Vagina (tissue), 2 donors: ENCODE measurements at regions of chr22 and their contacts with region 1.

Region 1: GRCh38 chr22:46267431-46268279 is at the start of gene TTC38:
- DNase-seq: no peak
- H3K4me3 ChIP-seq: peak within 1 kb of the TSS; percentile 61 to 94
- H3K27ac ChIP-seq: peak within 1 kb of the TSS; percentile 75
- H3K4me1 ChIP-seq: peaks cover 36% of the 10 kb centered on the region
- H3K27me3 ChIP-seq: no peaks in the 10 kb centered on the region
- CTCF ChIP-seq: no peak
- POLR2A ChIP-seq: no peak
- total RNA-seq, gene TTC38: 58.7 TPM

Region 2: DNA sequence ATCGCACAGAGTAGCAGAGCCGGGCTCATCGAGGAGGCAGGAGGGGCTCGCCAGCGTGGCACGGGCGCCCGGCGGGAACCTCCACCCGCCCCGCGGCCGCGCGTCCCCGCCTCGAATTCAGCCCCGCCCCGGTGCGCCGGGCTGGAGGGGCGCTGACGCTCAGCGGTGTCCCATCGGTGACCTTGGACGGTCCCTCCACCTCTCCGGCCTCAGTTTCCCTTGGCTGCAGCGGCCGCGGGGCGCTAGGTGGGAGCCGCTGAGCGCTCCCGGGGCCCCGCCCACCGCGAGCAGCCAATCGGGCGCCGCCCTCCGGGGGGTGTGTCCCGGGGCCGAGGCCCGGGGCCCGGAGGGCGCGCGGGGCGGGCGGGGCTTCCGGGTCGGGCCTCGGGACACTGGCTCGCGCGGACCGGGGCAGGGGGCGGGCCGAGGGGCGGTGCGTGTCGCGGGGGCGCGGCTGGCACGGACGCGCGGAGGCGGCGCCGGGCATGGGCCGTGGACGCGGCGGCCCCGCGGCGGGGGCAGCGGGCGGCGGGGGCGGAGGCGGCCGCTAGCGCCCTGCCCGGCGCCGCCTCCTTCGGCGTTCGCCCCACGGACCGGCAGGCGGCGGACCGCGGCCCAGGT is 117.5 kb before region 1 on chr22 and contains the start of gene PPARA:
- intact Hi-C with region 1: loop called (anchors 10 kb)
- DNase-seq: peak in 1 of 2 donors; percentile 81
- H3K4me3 ChIP-seq: peak within 1 kb of the TSS; percentile 76 to 97
- H3K27ac ChIP-seq: peak within 1 kb of the TSS; percentile 92
- H3K4me1 ChIP-seq: peaks cover 42% of the 10 kb centered on the region
- H3K27me3 ChIP-seq: no peaks in the 10 kb centered on the region
- CTCF ChIP-seq: no peak
- POLR2A ChIP-seq: peak in 1 of 2 donors; percentile 46
- total RNA-seq, gene PPARA: 13.5 TPM

Region 3: GRCh38 chr22:46462726-46463371 is 195.2 kb after region 1 on chr22:
- intact Hi-C with region 1: no loop called
- DNase-seq: no peak
- H3K4me3 ChIP-seq: no peak overlapping the region
- H3K27ac ChIP-seq: no peak overlapping the region
- H3K4me1 ChIP-seq: peaks cover 22% of the 10 kb centered on the region
- H3K27me3 ChIP-seq: no peaks in the 10 kb centered on the region
- CTCF ChIP-seq: no peak
- POLR2A ChIP-seq: no peak